Activated T-helper 1 cell treated with anti-CD3 and anti-CD28 coated beads, Interleukin-12 subunit alpha, Interleukin-12 subunit beta, Interleukin-2, Interleukin-4 antibody, amounts not matched to agents 30 ng/mL and 10 ng/mL and 1 ng/mL, durations not matched to agents 14 hours and 24 hours and 36 hours (primary cell): ENCODE measurements at regions of chr11 and their contacts with region 1.

Region 1: GRCh38 chr11:57792060-57792541 is 30.5 kb downstream of the CTNND1 start:
- DNase-seq: peak; percentile 84
- H3K4me3 Mint-ChIP-seq: peak overlapping the region; percentile 53
- H3K27ac Mint-ChIP-seq: peak overlapping the region; percentile 86
- H3K4me1 Mint-ChIP-seq: peaks cover 50% of the 10 kb centered on the region
- H3K27me3 Mint-ChIP-seq: peaks cover 1% of the 10 kb centered on the region

Region 2: GRCh38 chr11:57335343-57336110 is 456.6 kb before region 1 on chr11 and contains the start of gene SSRP1:
- intact Hi-C with region 1: loop called (anchors 10 kb)
- DNase-seq: peak; percentile 81
- H3K4me3 Mint-ChIP-seq: peak within 1 kb of the TSS; percentile 92
- H3K27ac Mint-ChIP-seq: peak within 1 kb of the TSS; percentile 99
- H3K4me1 Mint-ChIP-seq: peaks cover 39% of the 10 kb centered on the region
- H3K27me3 Mint-ChIP-seq: peaks cover 1% of the 10 kb centered on the region
- total RNA-seq, gene SSRP1: 235 and 239 TPM in 2 replicates

Region 3: DNA sequence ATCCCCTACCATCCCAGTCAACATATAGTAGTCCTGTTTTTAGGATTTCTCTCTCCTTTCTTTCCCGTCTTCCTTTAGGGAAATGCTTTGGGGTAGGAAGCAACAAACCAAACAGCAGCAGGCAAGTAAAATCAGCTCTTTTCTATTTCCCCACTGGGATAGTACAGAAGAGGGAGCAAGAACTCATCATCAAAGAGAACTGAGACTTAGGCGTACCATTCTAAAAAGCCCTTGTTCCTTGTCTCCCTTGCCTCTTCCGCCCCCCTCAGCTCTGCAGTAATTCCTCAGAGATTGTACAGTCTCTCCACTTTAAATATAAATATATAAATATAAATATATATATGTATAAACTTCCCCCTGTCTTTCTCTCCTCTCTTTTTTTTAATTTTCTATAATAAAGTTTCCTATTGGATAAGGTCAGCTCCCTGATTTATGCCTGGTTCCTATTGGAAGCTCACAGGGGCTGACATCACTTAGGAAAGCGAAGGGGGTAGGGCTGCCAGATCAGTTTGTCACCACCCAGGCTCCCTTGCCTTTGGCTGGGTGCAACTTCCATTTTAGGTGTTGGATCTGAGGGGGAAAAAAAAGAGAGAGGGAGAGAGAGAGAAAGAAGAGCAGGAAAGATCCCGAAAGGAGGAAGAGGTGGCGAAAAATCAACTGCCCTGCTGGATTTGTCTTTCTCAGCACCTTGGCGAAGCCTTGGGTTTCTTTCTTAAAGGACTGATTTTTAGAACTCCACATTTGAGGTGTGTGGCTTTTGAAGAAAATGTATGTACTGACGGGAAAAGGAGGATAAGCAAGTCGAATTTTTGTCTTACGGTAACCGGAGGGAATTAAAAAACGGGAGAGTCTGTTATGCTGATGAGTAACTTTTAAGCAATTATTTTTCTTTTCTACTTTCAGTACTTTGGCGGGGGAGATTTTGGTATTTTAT is 30.5 kb before region 1 on chr11 and contains the start of gene CTNND1:
- intact Hi-C with region 1: loop called (anchors 1 kb)
- DNase-seq: no peak
- H3K4me3 Mint-ChIP-seq: peak within 1 kb of the TSS; percentile 57
- H3K27ac Mint-ChIP-seq: no peak within 1 kb of the TSS
- H3K4me1 Mint-ChIP-seq: peaks cover 37% of the 10 kb centered on the region
- H3K27me3 Mint-ChIP-seq: peaks cover 4% of the 10 kb centered on the region
- total RNA-seq, gene CTNND1: 6.4 and 9.9 TPM in 2 replicates

Region 4: GRCh38 chr11:58573451-58574104 is 781.5 kb after region 1 on chr11:
- intact Hi-C with region 1: loop called (anchors 2 kb)
- DNase-seq: no peak
- H3K4me3 Mint-ChIP-seq: peak overlapping the region; percentile 90
- H3K27ac Mint-ChIP-seq: peak overlapping the region; percentile 100
- H3K4me1 Mint-ChIP-seq: peaks cover 68% of the 10 kb centered on the region
- H3K27me3 Mint-ChIP-seq: no peaks in the 10 kb centered on the region